Mammary epithelial cell (primary cell): ENCODE measurements at regions of chr18 and their contacts with region 1.

Region 1: GRCh38 chr18:41809652-41810051 is 145.4 kb upstream of the PIK3C3 start:
- DNase-seq: peak; percentile 33
- H3K4me3 ChIP-seq: no peak overlapping the region
- H3K27ac ChIP-seq: no peak overlapping the region
- H3K4me1 ChIP-seq: no peaks in the 10 kb centered on the region
- H3K27me3 ChIP-seq: no peaks in the 10 kb centered on the region
- CTCF ChIP-seq: no peak

Region 2: GRCh38 chr18:41753826-41754225 is 55.8 kb before region 1 on chr18:
- CTCF ChIA-PET with region 1: no interaction called
- dilution Hi-C with region 1: loop called (anchors 5 kb)
- in situ Hi-C with region 1: no loop called
- intact Hi-C with region 1: no loop called
- DNase-seq: peak; percentile 43
- H3K4me3 ChIP-seq: no peak overlapping the region
- H3K27ac ChIP-seq: no peak overlapping the region
- H3K4me1 ChIP-seq: peaks cover 18% of the 10 kb centered on the region
- H3K27me3 ChIP-seq: no peaks in the 10 kb centered on the region
- CTCF ChIP-seq: no peak